A549 (cell line): ENCODE measurements at regions of chr19 and their contacts with region 1.

Region 1: GRCh38 chr19:35693830-35694599 is 10.3 kb upstream of the ZBTB32 start:
- DNase-seq: peak; percentile 95 to 97
- ATAC-seq: peak; percentile 99
- H3K4me3 ChIP-seq: no peak overlapping the region
- H3K27ac ChIP-seq: 0 out of 6 replicates have a peak overlapping the region, but pooled peaks of 1 of the 2 experiments have one; percentile 4
- H3K4me1 ChIP-seq: no peaks in the 10 kb centered on the region
- CTCF ChIP-seq: peak; percentile 100
- EP300 ChIP-seq: no peak
- POLR2A ChIP-seq: no peak
- RAD21 ChIP-seq: peak; percentile 99 to 100

Region 2: DNA sequence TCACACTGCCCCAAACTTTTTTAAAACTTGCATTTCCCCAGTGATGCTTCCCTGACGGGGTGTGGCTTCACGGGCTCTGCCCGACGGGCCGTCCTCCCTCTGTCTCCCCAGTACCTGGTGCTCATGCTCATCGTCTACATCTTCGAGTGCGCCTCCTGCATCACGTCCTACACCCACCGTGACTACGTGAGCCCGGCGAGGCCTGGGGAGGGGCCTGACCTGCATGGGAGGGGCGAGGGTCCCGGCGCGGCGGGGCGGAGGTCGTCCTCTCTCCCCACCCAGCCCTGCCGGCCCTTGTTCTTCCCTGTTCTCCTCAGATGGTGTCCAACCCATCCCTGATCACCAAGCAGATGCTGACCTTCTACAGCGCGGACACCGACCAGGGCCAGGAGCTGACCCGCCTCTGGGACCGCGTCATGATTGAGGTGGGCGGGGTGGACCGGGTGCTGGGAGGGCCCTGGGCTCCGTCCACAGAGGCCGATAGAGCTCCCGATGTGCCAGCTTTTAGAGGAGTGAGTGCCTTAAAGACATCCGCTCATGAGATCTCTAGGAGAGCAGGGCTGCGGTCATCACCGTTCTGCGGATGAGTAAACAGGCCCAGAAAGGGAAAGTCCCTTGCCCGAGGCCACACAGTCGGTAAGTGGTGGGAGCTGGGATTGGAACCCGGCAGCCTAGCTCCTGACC is 20.8 kb before region 1 on chr19:
- CTCF ChIA-PET with region 1: interaction called, 85 read pairs
- POLR2A ChIA-PET with region 1: no interaction called
- DNase-seq: peak; percentile 85 to 99
- ATAC-seq: peak; percentile 94 to 97
- H3K4me3 ChIP-seq: peak overlapping the region; percentile 47
- H3K27ac ChIP-seq: peak overlapping the region; percentile 42 to 77
- H3K4me1 ChIP-seq: no peaks in the 10 kb centered on the region
- CTCF ChIP-seq: no peak
- EP300 ChIP-seq: no peak
- POLR2A ChIP-seq: no peak
- RAD21 ChIP-seq: no peak

Region 3: DNA sequence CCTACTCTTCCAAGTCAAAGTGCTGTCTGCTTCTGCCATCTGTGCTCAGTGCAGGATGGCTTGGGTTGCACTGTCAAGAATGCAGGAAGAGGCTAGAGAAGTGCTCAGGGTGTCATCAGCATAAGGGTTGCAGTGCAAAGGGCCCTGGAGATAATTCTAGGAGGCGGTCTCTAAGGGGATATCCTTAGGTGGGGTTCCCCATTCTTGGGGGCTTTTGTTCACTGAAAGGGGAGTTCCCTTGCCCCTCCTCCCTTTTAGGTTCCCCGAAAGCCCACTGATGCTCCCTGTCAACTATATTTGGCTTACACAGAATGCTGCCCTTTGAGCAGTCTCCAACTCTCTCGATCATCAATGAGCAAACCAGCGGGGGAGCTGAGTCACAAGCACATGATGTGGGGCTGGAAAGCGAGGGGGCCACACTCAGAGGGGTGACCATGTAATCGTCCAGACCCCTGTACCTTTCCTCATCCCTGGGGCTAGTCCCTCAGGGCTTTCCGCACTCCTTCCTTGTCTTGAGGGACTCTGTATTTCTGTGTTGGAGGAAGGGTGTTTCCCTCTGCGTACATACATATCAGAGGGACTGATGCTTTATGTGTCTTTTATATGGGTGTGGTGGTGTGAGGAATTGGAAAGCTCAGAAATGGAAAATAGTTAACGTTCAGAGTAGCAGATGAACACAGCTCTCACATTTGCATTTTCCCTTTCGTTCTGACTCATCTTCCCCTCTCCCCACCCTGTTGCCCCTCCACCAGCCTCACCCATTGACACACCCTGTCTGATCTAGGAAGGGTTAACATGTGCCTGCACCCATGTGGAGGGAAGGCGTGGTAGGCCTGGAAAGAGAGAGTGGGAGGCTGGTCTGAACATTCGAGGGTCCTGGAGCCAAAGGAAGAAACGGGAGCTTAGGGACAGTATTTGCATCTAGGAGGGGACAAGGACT is 17.0 kb after region 1 on chr19:
- CTCF ChIA-PET with region 1: interaction called, 161 read pairs
- POLR2A ChIA-PET with region 1: interaction called, 5 read pairs
- DNase-seq: no peak
- ATAC-seq: no peak; a peak in 1 of 6 replicates
- H3K4me3 ChIP-seq: no peak overlapping the region
- H3K27ac ChIP-seq: no peak overlapping the region
- H3K4me1 ChIP-seq: peaks cover 10% of the 10 kb centered on the region
- CTCF ChIP-seq: no peak
- EP300 ChIP-seq: no peak
- POLR2A ChIP-seq: peak; percentile 24
- RAD21 ChIP-seq: no peak

Region 4: DNA sequence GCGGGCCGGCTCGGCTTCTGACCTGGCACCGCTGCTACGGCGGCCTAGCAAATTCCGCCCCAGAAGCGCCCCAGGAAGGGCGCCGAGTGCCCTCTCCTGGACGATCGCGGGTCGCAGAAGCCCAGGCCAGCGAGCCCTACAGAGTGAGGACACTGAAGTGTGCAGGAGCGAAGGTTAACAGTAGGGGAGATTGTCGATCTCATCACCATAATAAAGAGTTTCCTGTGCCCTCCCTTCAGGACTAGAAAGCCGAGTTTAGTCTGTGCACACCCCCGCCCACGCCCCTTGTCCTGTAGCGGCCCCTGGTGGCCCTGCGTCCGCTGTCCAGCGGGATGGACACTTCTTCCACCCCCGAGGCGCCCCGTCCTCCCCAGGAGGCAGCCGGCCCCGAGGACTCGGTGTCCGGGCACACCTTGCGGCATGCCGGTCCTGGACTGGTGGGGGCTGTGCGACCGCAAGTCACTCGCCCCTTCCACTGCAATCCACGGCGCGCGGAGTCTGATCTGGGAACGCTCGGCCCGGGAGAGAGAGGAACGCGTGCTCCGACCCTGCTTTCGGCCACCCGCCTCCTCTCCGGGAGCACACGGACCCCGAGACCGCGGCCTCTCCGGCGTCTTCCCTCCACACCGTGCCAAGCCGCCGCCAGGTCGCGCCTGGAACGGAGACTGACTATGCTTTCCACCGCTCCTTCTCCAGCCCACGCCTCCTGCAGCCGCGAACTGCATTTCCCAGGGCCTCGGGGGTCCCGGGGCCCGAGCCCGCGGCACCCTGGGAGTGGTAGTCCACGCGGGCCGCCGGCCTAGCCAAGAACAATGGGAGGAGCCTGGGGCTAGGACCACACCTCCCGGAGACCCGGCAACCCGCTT is 23.0 kb after region 1 on chr19:
- CTCF ChIA-PET with region 1: interaction called, 161 read pairs
- POLR2A ChIA-PET with region 1: interaction called, 5 read pairs
- DNase-seq: peak; percentile 95 to 99
- ATAC-seq: peak; percentile 74 to 91
- H3K4me3 ChIP-seq: peak overlapping the region; percentile 87
- H3K27ac ChIP-seq: peak overlapping the region; percentile 91 to 98
- H3K4me1 ChIP-seq: peaks cover 20% of the 10 kb centered on the region
- CTCF ChIP-seq: peak; percentile 100
- EP300 ChIP-seq: no peak
- POLR2A ChIP-seq: peak; percentile 74
- RAD21 ChIP-seq: peak; percentile 89 to 99

Region 5: GRCh38 chr19:35740423-35741202 is 46.6 kb after region 1 on chr19:
- CTCF ChIA-PET with region 1: interaction called, 11 read pairs
- POLR2A ChIA-PET with region 1: no interaction called
- DNase-seq: peak; percentile 97 to 100
- ATAC-seq: peak; percentile 58 to 86
- H3K4me3 ChIP-seq: peak overlapping the region; percentile 47
- H3K27ac ChIP-seq: peak overlapping the region; percentile 70 to 84
- H3K4me1 ChIP-seq: peaks cover 20% of the 10 kb centered on the region
- CTCF ChIP-seq: no peak
- EP300 ChIP-seq: no peak
- POLR2A ChIP-seq: peak; percentile 78
- RAD21 ChIP-seq: peak in 1 of 2 experiments; percentile 3; a peak in 1 of 5 replicates

Region 6: GRCh38 chr19:35822579-35822978 is 128.6 kb after region 1 on chr19:
- CTCF ChIA-PET with region 1: interaction called, 16 read pairs
- POLR2A ChIA-PET with region 1: no interaction called
- DNase-seq: peak in 1 of 2 experiments; percentile 29
- ATAC-seq: peak; percentile 48 to 60; a peak in 4 of 6 replicates
- H3K4me3 ChIP-seq: no peak overlapping the region
- H3K27ac ChIP-seq: no peak overlapping the region
- H3K4me1 ChIP-seq: no peaks in the 10 kb centered on the region
- CTCF ChIP-seq: no peak
- EP300 ChIP-seq: no peak
- POLR2A ChIP-seq: no peak
- RAD21 ChIP-seq: no peak

Region 7: DNA sequence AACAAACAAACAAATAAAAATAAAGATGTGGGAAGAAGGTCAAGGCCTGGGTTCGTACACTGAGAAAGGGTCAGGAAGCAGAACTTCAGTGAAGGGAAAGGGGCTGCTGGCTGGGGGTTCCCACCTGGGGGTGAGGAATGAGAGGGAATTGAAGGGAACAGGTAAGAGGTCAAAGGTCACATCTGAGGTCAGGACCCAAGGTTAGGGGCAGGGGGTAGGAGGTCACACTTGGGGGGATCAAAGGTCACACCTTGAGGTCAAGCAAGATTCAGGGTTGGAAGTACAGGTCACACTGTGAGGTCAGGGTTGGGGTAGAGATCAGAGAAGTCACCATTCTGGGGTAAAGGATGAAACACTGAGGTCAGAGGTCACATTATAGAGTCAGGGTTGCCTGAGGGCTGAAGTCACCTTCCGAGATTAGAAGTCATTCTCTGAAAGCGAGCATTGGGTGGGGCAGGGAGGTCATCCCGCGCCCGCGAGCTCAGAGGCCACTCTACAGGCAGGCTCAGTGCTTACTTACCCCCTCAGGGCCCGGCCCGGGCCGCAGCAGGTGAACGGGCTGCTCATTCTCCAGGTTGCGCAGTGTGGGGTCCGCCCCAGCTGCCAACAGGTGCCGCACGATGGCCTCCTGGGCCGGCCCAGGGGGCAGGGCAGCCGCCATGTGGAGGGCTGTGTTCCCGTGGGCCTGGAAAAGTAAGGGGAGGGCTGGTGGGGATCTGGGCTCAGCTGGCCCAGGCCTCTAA is 195.5 kb after region 1 on chr19:
- CTCF ChIA-PET with region 1: no interaction called
- POLR2A ChIA-PET with region 1: no interaction called
- DNase-seq: no peak
- ATAC-seq: peak; percentile 13 to 28; a peak in 5 of 6 replicates
- H3K4me3 ChIP-seq: no peak overlapping the region
- H3K27ac ChIP-seq: no peak overlapping the region
- H3K4me1 ChIP-seq: no peaks in the 10 kb centered on the region
- CTCF ChIP-seq: no peak
- EP300 ChIP-seq: no peak
- POLR2A ChIP-seq: no peak
- RAD21 ChIP-seq: no peak

Region 8: GRCh38 chr19:36207605-36208252 is 513.7 kb after region 1 on chr19:
- CTCF ChIA-PET with region 1: no interaction called
- POLR2A ChIA-PET with region 1: no interaction called
- DNase-seq: no peak
- ATAC-seq: no peak
- H3K4me3 ChIP-seq: no peak overlapping the region
- H3K27ac ChIP-seq: no peak overlapping the region
- H3K4me1 ChIP-seq: no peaks in the 10 kb centered on the region
- CTCF ChIP-seq: no peak
- EP300 ChIP-seq: no peak
- POLR2A ChIP-seq: no peak
- RAD21 ChIP-seq: no peak